ENCODE measurements at regions of chrX and their contacts with region 1.

Region 1: GRCh38 chrX:155094468-155095061 is 23.3 kb downstream of the BRCC3 start:
- DNase-seq: peak; percentile 66
- H3K4me3 Mint-ChIP-seq: no peak overlapping the region
- H3K27ac Mint-ChIP-seq: no peak overlapping the region
- H3K4me1 Mint-ChIP-seq: no peaks in the 10 kb centered on the region
- H3K27me3 Mint-ChIP-seq: peaks cover 14% of the 10 kb centered on the region
- CTCF ChIP-seq: peak; percentile 57

Region 2: GRCh38 chrX:155070975-155071693 is 23.4 kb before region 1 on chrX and contains the starts of genes BRCC3, CMC4 and MTCP1:
- CTCF ChIA-PET with region 1: interaction called, 10 read pairs
- POLR2A ChIA-PET with region 1: interaction called, 3 read pairs
- intact Hi-C with region 1: no loop called
- DNase-seq: peak; percentile 75
- H3K4me3 Mint-ChIP-seq: peak within 1 kb of the TSS; percentile 83
- H3K27ac Mint-ChIP-seq: peak within 1 kb of the TSS; percentile 65
- H3K4me1 Mint-ChIP-seq: peaks cover 30% of the 10 kb centered on the region
- H3K27me3 Mint-ChIP-seq: peaks cover 31% of the 10 kb centered on the region
- CTCF ChIP-seq: no peak
- total RNA-seq, gene BRCC3: 21.1 and 22.9 TPM in 2 replicates
- total RNA-seq, gene CMC4: 8.0 and 10.1 TPM in 2 replicates
- total RNA-seq, gene MTCP1: 21.3 and 32.2 TPM in 2 replicates

Region 3: GRCh38 chrX:155112171-155112570 is 17.6 kb after region 1 on chrX:
- CTCF ChIA-PET with region 1: interaction called, 11 read pairs
- POLR2A ChIA-PET with region 1: interaction called, 3 read pairs
- intact Hi-C with region 1: no loop called
- DNase-seq: peak; percentile 83
- H3K4me3 Mint-ChIP-seq: no peak overlapping the region
- H3K27ac Mint-ChIP-seq: peak overlapping the region; percentile 89
- H3K4me1 Mint-ChIP-seq: peaks cover 14% of the 10 kb centered on the region
- H3K27me3 Mint-ChIP-seq: no peaks in the 10 kb centered on the region
- CTCF ChIP-seq: no peak

Region 4: DNA sequence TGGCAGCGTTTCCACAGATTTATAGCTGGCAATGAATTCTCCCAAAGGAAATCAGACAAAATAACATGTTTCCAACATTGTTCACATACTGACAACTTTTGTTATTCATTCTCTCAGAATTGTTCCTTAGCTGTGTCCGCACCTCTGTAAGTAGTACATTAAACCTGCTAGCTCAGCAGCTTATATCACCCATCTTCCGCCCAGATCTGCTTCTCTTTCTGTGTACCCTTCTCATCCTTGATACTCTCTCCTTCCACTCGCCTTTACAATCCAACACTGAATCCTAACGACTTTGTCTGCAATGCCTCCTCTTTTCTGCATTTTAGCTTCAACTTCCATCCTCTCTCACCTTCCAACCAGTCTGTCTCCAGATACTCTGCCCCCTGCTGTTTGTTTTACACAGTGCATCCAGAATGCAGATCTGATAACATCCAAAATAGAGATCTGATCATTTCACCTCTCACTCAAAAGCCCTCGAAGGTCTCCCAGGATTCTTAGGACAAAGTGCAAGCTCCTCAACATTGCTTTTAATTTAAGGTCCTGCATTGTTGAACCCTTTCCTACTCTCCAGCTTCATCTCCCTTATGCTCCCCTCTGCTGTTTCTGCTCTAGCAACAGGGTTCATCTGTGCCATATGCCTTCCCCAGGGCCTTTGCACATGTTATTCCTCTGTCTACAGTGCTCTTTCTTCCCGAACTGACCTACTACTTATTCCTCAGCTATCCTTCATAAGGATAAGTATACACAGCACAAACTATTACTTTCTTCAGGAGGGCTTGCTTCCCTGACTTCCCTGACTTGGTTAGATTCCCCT is 54.4 kb after region 1 on chrX:
- CTCF ChIA-PET with region 1: interaction called, 4 read pairs
- POLR2A ChIA-PET with region 1: no interaction called
- intact Hi-C with region 1: loop called (anchors 1 kb)
- DNase-seq: peak; percentile 54
- H3K4me3 Mint-ChIP-seq: no peak overlapping the region
- H3K27ac Mint-ChIP-seq: no peak overlapping the region
- H3K4me1 Mint-ChIP-seq: no peaks in the 10 kb centered on the region
- H3K27me3 Mint-ChIP-seq: no peaks in the 10 kb centered on the region
- CTCF ChIP-seq: peak; percentile 46

Region 5: GRCh38 chrX:155216179-155216939 is 121.8 kb after region 1 on chrX and contains the start of gene VBP1:
- CTCF ChIA-PET with region 1: interaction called, 5 read pairs
- POLR2A ChIA-PET with region 1: interaction called, 6 read pairs
- intact Hi-C with region 1: loop called (anchors 5 kb)
- DNase-seq: peak; percentile 92
- H3K4me3 Mint-ChIP-seq: peak within 1 kb of the TSS; percentile 89
- H3K27ac Mint-ChIP-seq: peak within 1 kb of the TSS; percentile 94
- H3K4me1 Mint-ChIP-seq: peaks cover 10% of the 10 kb centered on the region
- H3K27me3 Mint-ChIP-seq: no peaks in the 10 kb centered on the region
- CTCF ChIP-seq: peak; percentile 39
- total RNA-seq, gene VBP1: 60.5 and 62.9 TPM in 2 replicates

Region 6: DNA sequence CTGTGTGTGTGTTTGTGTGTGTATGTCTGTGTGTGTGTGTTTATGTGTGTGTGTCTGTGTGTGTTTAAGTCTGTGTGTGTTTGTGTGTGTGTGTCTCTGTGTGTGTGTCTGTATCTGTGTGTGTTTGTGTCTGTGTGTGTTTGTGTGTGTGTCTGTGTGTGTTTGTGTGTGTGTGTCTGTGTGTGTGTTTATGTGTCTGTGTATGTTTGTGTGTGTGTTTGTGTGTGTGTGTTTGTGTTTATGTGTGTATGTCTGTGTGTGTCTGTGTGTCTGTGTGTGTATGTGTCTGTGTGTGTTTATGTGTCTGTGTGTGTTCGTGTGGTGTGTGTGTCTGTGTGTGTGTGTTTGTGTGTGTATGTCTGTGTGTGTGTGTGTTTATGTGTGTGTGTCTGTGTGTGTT is 914.4 kb after region 1 on chrX:
- CTCF ChIA-PET with region 1: no interaction called
- POLR2A ChIA-PET with region 1: no interaction called
- intact Hi-C with region 1: no loop called
- DNase-seq: no peak
- H3K4me3 Mint-ChIP-seq: no peak overlapping the region
- H3K27ac Mint-ChIP-seq: no peak overlapping the region
- H3K4me1 Mint-ChIP-seq: no peaks in the 10 kb centered on the region
- H3K27me3 Mint-ChIP-seq: no peaks in the 10 kb centered on the region
- CTCF ChIP-seq: no peak